Activated CD4-positive, alpha-beta memory T cell treated with anti-CD3 and anti-CD28 coated beads, Interleukin-2, amount 10 ng/mL, durations not matched to agents 7 days and 5 days (primary cell): ENCODE measurements at regions of chr11 and their contacts with region 1.

Region 1: GRCh38 chr11:18721561-18722292 is 4.3 kb downstream of the IGSF22 start:
- DNase-seq: peak; percentile 54
- H3K4me3 Mint-ChIP-seq: peak overlapping the region; percentile 80
- H3K27ac Mint-ChIP-seq: peak overlapping the region; percentile 31
- H3K4me1 Mint-ChIP-seq: peaks cover 12% of the 10 kb centered on the region
- H3K27me3 Mint-ChIP-seq: peaks cover 11% of the 10 kb centered on the region

Region 2: DNA sequence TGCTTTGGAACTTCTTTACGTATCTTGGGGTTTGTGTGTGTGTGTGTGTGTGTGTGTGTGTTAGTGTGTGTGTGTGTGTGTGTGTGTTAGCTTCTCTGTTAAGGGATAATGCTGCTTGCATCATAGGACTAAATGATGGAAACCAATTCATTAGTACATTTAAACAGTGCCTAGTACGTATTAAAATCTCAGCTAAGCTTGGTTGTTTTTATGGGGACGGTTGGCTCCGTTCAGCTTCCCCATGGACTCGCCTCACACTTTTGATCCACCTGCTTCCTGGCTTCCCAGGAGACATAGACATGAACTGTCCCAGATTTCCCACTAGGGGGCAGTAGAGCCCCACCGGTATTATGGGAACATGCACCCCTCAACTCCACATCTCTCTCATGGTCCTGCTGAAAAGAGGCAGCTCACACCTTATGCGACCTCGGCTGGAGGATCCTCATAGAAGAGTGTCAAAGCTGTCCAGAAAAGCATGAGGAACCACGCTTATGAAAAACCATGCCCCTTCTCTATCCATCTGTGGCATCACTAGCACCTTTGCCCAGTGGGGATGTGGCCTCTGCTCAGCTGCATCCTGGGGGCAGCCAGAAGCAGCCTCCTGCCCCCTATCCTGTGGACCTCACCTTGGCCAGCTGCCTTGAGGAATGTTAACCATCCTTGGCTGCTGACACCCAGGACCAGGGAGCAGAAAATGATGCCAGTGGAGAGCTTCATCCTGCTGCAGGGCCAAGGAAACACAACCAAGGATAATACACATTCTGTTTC is 606.2 kb before region 1 on chr11:
- CTCF ChIA-PET with region 1: interaction called, 10 read pairs
- POLR2A ChIA-PET with region 1: no interaction called
- DNase-seq: peak; percentile 69
- H3K4me3 Mint-ChIP-seq: no peak overlapping the region
- H3K27ac Mint-ChIP-seq: no peak overlapping the region
- H3K4me1 Mint-ChIP-seq: no peaks in the 10 kb centered on the region
- H3K27me3 Mint-ChIP-seq: peaks cover 29% of the 10 kb centered on the region

Region 3: DNA sequence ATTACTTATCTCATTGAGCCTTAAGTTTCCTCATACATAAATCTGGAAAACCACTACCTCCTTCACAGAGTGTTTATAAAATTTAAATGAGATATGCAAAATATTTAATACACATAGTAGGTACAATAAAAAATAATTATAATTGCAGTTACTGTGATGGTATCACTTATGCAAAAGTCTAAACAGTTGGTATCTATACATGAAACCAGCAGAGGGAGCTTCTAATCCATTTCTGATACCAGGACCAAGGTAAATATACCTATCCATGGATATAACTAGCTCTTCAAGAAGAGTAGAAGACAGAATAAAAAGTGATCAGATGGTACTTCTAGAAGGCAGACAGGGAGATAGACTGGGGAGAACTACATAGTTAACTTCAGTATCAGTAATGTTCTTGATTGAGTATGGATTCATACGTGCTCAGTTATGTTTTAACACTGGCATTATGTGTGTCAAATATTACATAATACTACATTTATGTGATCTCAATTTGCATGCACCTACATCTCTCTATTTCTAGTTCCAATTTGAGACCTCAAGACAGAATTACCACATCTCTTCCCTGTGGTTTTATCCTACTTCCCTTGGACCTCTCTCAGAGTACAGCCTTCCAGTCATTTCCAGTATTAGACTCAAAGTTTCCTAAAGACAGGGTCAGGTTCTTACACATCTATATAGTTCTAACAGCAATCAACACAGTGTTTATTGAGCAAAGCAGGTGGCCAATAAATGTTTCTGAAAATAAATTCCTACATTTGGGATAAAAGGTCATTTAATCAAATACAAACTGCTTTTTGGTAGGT is 181.3 kb before region 1 on chr11:
- CTCF ChIA-PET with region 1: interaction called, 23 read pairs
- POLR2A ChIA-PET with region 1: no interaction called
- DNase-seq: no peak
- H3K4me3 Mint-ChIP-seq: no peak overlapping the region
- H3K27ac Mint-ChIP-seq: no peak overlapping the region
- H3K4me1 Mint-ChIP-seq: peaks cover 1% of the 10 kb centered on the region
- H3K27me3 Mint-ChIP-seq: no peaks in the 10 kb centered on the region

Region 4: GRCh38 chr11:18698341-18699268 is 23.1 kb before region 1 on chr11 and contains the start of gene TMEM86A:
- CTCF ChIA-PET with region 1: interaction called, 12 read pairs
- POLR2A ChIA-PET with region 1: interaction called, 10 read pairs
- DNase-seq: peak; percentile 93
- H3K4me3 Mint-ChIP-seq: peak within 1 kb of the TSS; percentile 75
- H3K27ac Mint-ChIP-seq: no peak within 1 kb of the TSS
- H3K4me1 Mint-ChIP-seq: peaks cover 24% of the 10 kb centered on the region
- H3K27me3 Mint-ChIP-seq: peaks cover 18% of the 10 kb centered on the region
- total RNA-seq, gene TMEM86A: 1.8 to 2.4 TPM

Region 5: GRCh38 chr11:18731949-18732821 is 10.5 kb after region 1 on chr11:
- CTCF ChIA-PET with region 1: interaction called, 45 read pairs
- POLR2A ChIA-PET with region 1: interaction called, 5 read pairs
- DNase-seq: peak; percentile 70
- H3K4me3 Mint-ChIP-seq: no peak overlapping the region
- H3K27ac Mint-ChIP-seq: no peak overlapping the region
- H3K4me1 Mint-ChIP-seq: peaks cover 5% of the 10 kb centered on the region
- H3K27me3 Mint-ChIP-seq: peaks cover 2% of the 10 kb centered on the region

Region 6: DNA sequence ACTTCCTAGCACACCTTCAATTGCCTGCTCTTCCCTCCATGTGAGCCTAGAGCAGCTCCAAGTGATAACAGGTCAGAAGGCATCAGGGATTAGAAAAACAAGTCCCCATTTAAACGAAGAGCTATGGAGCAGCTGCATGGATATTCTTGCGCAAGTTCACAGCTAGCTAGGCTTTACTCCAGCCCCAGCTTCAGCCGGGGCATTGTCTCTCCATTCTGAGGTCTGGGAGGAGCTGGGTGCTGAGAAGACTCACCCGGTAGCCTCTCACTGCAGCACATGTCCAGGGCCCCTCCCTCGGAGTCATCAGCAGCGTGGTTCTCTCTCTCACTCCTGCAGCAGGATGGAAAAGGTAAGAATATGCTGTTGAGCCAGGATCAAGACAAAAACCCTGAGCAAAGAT is 43.8 kb after region 1 on chr11:
- CTCF ChIA-PET with region 1: interaction called, 13 read pairs
- POLR2A ChIA-PET with region 1: no interaction called
- DNase-seq: no peak
- H3K4me3 Mint-ChIP-seq: no peak overlapping the region
- H3K27ac Mint-ChIP-seq: no peak overlapping the region
- H3K4me1 Mint-ChIP-seq: peaks cover 35% of the 10 kb centered on the region
- H3K27me3 Mint-ChIP-seq: peaks cover 7% of the 10 kb centered on the region

Region 7: DNA sequence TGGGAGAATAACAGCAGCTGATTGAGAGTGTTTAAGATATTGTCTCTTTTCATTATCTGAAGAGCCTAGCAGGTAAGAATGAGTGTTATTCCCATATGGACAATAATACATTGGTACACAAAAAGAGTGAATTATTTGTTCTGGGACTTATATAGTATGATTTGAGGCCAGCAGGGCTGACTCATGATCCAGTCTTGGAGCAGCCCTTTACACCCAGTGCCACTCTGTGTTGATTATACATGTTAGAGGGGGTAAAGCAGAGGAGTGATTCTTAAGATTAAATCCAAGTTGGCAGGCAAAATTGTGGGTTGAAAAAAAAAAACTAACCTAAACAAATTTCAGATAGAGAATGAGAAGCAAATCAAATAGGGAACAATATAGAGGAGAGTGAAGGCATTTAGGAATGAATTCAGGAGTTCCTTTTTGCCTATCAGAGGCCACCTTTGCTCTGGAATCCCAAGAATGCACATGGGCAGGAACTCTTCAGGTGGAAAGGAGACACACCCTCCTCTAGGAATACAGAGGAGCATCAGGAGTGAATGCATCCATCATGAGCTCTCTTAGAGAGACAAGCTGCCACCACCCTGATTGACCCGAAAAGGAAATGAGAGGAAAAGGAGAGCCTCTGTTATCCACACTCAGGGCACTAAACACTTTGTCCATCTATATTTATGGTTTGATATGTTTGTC is 236.6 kb after region 1 on chr11:
- CTCF ChIA-PET with region 1: no interaction called
- POLR2A ChIA-PET with region 1: no interaction called
- DNase-seq: no peak
- H3K4me3 Mint-ChIP-seq: no peak overlapping the region
- H3K27ac Mint-ChIP-seq: no peak overlapping the region
- H3K4me1 Mint-ChIP-seq: no peaks in the 10 kb centered on the region
- H3K27me3 Mint-ChIP-seq: peaks cover 2% of the 10 kb centered on the region